ENCODE measurements at regions of chr10 and their contacts with region 1.

Region 1: DNA sequence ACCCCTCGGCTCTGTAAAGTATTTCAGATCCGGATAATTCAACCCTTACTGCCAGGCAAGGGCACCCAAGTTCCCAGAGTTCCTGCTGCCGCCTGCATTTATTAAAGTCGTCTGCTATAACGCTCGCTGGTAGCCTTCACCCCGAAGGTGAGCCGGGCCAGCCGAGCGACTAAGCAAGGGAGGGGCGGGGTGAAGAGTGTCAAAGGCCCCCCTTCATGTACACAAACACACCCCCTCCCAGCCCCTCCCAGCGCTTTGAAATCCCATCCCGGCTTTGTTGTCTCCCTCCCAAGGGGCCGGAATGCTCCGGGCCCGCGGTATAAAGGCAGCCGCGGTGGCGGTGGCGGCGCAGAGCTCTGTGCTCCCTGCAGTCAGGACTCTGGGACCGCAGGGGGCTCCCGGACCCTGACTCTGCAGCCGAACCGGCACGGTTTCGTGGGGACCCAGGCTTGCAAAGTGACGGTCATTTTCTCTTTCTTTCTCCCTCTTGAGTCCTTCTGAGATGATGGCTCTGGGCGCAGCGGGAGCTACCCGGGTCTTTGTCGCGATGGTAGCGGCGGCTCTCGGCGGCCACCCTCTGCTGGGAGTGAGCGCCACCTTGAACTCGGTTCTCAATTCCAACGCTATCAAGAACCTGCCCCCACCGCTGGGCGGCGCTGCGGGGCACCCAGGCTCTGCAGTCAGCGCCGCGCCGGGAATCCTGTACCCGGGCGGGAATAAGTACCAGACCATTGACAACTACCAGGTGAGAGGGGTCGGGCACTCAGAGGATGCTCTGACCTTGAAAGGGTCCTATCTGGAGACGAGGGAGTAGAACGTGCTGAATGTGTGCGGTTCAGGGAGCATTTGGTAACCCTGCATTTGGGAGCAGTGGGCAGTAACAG is at the start of gene DKK1:
- DNase-seq: peak; percentile 42
- ATAC-seq: peak; percentile 67 to 77
- total RNA-seq, gene DKK1: not detected

Region 2: GRCh38 chr10:52187521-52188258 is 126.5 kb before region 1 on chr10:
- intact Hi-C with region 1: no loop called
- DNase-seq: no peak
- ATAC-seq: no peak

Region 3: GRCh38 chr10:52644373-52645186 is 330.4 kb after region 1 on chr10:
- intact Hi-C with region 1: loop called in 1 of 2 experiments (anchors 10 kb)
- DNase-seq: peak; percentile 38
- ATAC-seq: peak in 1 of 2 donors; percentile 49

Region 4: GRCh38 chr10:52779541-52780390 is 465.6 kb after region 1 on chr10:
- intact Hi-C with region 1: loop called in 1 of 2 experiments (anchors 2 kb)
- DNase-seq: peak; percentile 62
- ATAC-seq: peak; percentile 65 to 87